ENCODE measurements at regions of chr5 and their contacts with region 1.

Region 1: GRCh38 chr5:180611140-180611850 is 20.0 kb upstream of the SCGB3A1 start:
- DNase-seq: peak; percentile 70
- ATAC-seq: peak; percentile 95
- H3K4me3 ChIP-seq: no peak overlapping the region
- H3K27ac ChIP-seq: no peak overlapping the region
- H3K4me1 ChIP-seq: no peaks in the 10 kb centered on the region
- H3K27me3 ChIP-seq: peaks cover 19 to 65% of the 10 kb centered on the region in 2 experiments
- CTCF ChIP-seq: peak; percentile 94
- EP300 ChIP-seq: no peak
- POLR2A ChIP-seq: no peak
- RAD21 ChIP-seq: peak; percentile 89

Region 2: DNA sequence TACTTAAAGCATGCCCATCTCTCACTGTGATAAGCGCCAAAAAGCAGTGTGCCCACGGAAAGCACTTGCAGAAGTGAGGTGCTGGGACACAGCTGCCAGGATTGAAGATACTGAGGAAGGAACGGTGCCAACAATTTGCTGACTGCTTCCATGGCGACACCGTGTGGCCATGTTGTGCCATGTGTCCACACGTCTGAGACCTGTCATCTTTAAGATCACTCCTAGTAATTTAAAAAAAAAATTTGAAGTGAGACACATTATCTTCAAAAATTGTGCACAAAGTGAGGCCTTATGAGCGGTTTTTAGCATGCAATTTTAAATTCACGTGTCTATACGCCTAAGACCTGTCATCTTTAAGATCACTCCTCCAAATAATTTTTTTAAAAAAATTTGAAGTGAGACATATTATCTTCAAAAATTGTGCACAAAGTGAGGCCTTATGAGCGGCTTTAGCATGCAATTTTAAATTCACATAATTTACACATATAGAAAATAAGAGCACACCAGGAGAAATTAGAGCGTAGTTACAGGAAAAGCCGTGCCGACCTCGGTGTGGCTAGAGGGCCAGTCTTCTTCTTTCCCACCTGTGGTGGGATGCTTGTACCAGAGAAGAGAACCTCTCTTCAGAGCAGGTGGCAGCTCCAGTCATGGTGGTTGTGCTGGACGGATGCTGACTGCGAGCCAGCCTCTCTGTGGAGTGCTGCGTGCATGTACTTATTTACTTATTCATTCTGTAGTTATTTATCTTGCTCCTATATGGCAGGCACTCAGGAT is 59.5 kb after region 1 on chr5:
- CTCF ChIA-PET with region 1: interaction called, 14 read pairs
- POLR2A ChIA-PET with region 1: no interaction called
- in situ Hi-C with region 1: loop called (anchors 5 kb)
- intact Hi-C with region 1: loop called (anchors 1 kb)
- DNase-seq: peak; percentile 19
- ATAC-seq: peak; percentile 60
- H3K4me3 ChIP-seq: no peak overlapping the region
- H3K27ac ChIP-seq: no peak overlapping the region
- H3K4me1 ChIP-seq: peaks cover 24% of the 10 kb centered on the region
- H3K27me3 ChIP-seq: peaks cover 0 to 14% of the 10 kb centered on the region in 2 experiments; a peak in 1 of 5 replicates
- CTCF ChIP-seq: peak; percentile 83
- EP300 ChIP-seq: no peak
- POLR2A ChIP-seq: no peak
- RAD21 ChIP-seq: no peak

Region 3: GRCh38 chr5:180718810-180719453 is 107.6 kb after region 1 on chr5:
- CTCF ChIA-PET with region 1: interaction called, 5 read pairs
- POLR2A ChIA-PET with region 1: no interaction called
- in situ Hi-C with region 1: no loop called
- intact Hi-C with region 1: loop called (anchors 1 kb)
- DNase-seq: peak; percentile 25
- ATAC-seq: no peak; the same call in 2 of the 3 replicates
- H3K4me3 ChIP-seq: no peak overlapping the region
- H3K27ac ChIP-seq: no peak overlapping the region
- H3K4me1 ChIP-seq: no peaks in the 10 kb centered on the region
- H3K27me3 ChIP-seq: no peaks in the 10 kb centered on the region
- CTCF ChIP-seq: peak; percentile 56
- EP300 ChIP-seq: no peak
- POLR2A ChIP-seq: no peak
- RAD21 ChIP-seq: no peak

Measured in HepG2 (cell line).